B cell (primary cell): ENCODE measurements at regions of chr17 and their contacts with region 1.

Region 1: GRCh38 chr17:82871056-82871903 is 31.5 kb upstream of the ZNF750 start:
- DNase-seq: peak; percentile 95
- ATAC-seq: peak; percentile 82
- H3K4me3 ChIP-seq: peak overlapping the region in 3 of 5 experiments; percentile 18 to 30 (median 25)
- H3K4me3 Mint-ChIP-seq: peak overlapping the region; percentile 82
- H3K27ac ChIP-seq: peak overlapping the region; percentile 78 to 79
- H3K27ac Mint-ChIP-seq: peak overlapping the region; percentile 95
- H3K4me1 ChIP-seq: peaks cover 53 to 55% of the 10 kb centered on the region in 2 donors
- H3K4me1 Mint-ChIP-seq: peaks cover 56% of the 10 kb centered on the region
- H3K27me3 ChIP-seq: peaks cover 0 to 29% (median 0%) of the 10 kb centered on the region in 4 experiments
- H3K27me3 Mint-ChIP-seq: peaks cover 4% of the 10 kb centered on the region
- CTCF ChIP-seq: peak; percentile 73

Region 2: GRCh38 chr17:82816358-82817149 is 54.7 kb before region 1 on chr17:
- CTCF ChIA-PET with region 1: interaction called, 39 read pairs
- POLR2A ChIA-PET with region 1: interaction called, 22 read pairs
- intact Hi-C with region 1: loop called (anchors 1 kb)
- DNase-seq: no peak
- ATAC-seq: no peak
- H3K4me3 ChIP-seq: no peak overlapping the region
- H3K4me3 Mint-ChIP-seq: no peak overlapping the region
- H3K27ac ChIP-seq: no peak overlapping the region
- H3K27ac Mint-ChIP-seq: peak overlapping the region; percentile 20
- H3K4me1 ChIP-seq: peaks cover 24 to 34% of the 10 kb centered on the region in 2 donors
- H3K4me1 Mint-ChIP-seq: peaks cover 34% of the 10 kb centered on the region
- H3K27me3 ChIP-seq: no peaks in the 10 kb centered on the region
- H3K27me3 Mint-ChIP-seq: no peaks in the 10 kb centered on the region
- CTCF ChIP-seq: no peak

Region 3: GRCh38 chr17:82823004-82823403 is 48.3 kb before region 1 on chr17:
- CTCF ChIA-PET with region 1: interaction called, 39 read pairs
- POLR2A ChIA-PET with region 1: interaction called, 22 read pairs
- intact Hi-C with region 1: loop called (anchors 1 kb)
- DNase-seq: no peak
- ATAC-seq: no peak
- H3K4me3 ChIP-seq: no peak overlapping the region
- H3K4me3 Mint-ChIP-seq: no peak overlapping the region
- H3K27ac ChIP-seq: no peak overlapping the region
- H3K27ac Mint-ChIP-seq: no peak overlapping the region
- H3K4me1 ChIP-seq: peaks cover 18 to 19% of the 10 kb centered on the region in 2 donors
- H3K4me1 Mint-ChIP-seq: peaks cover 24% of the 10 kb centered on the region
- H3K27me3 ChIP-seq: no peaks in the 10 kb centered on the region
- H3K27me3 Mint-ChIP-seq: no peaks in the 10 kb centered on the region
- CTCF ChIP-seq: peak; percentile 9

Region 4: DNA sequence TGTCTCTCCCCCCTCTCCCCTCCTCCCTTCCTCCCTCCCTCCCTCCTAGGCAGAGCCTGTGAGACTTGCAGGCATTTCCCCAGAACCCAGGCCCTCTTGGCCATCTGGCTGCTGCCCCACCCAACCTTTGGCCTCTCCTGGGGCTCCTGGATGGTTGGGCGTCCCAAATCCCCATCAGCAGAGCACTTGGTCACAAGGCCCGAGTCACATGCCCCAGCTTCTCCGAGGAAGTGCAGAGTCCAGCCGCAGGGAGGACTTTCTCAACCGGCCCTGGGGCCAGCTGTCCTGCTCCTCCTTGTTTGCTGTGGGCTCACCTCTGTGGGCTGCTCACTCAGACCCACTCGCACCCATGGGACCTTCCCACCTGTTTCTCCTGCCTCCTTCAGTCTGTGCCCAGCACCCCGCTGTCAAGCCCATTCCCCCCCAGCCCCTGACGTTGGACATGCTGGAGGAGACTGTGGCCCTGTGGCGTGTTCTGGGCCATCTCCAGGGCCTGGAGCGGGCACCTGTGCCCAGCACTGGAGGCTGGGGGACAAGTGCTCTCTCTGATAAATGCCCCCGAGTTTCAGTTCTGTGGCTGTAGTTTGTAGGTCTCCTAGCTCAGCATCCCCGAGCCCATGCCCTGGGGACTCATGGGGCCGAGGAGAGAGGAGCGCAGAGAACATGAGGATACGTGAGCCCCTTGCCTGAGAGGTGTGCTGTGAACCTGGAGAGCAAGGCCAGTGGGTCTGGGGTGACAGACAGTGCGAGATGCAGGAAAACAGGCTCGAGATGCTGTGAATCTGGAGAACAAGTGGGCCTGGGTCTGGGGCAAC is 10.8 kb after region 1 on chr17:
- CTCF ChIA-PET with region 1: interaction called, 25 read pairs
- POLR2A ChIA-PET with region 1: interaction called, 20 read pairs
- intact Hi-C with region 1: loop called (anchors 1 kb)
- DNase-seq: no peak
- ATAC-seq: no peak
- H3K4me3 ChIP-seq: no peak overlapping the region
- H3K4me3 Mint-ChIP-seq: peak overlapping the region; percentile 53
- H3K27ac ChIP-seq: no peak overlapping the region
- H3K27ac Mint-ChIP-seq: peak overlapping the region; percentile 68
- H3K4me1 ChIP-seq: peaks cover 46 to 51% of the 10 kb centered on the region in 2 donors
- H3K4me1 Mint-ChIP-seq: peaks cover 52% of the 10 kb centered on the region
- H3K27me3 ChIP-seq: peaks cover 0 to 4% (median 0%) of the 10 kb centered on the region in 4 experiments
- H3K27me3 Mint-ChIP-seq: no peaks in the 10 kb centered on the region
- CTCF ChIP-seq: no peak

Region 5: DNA sequence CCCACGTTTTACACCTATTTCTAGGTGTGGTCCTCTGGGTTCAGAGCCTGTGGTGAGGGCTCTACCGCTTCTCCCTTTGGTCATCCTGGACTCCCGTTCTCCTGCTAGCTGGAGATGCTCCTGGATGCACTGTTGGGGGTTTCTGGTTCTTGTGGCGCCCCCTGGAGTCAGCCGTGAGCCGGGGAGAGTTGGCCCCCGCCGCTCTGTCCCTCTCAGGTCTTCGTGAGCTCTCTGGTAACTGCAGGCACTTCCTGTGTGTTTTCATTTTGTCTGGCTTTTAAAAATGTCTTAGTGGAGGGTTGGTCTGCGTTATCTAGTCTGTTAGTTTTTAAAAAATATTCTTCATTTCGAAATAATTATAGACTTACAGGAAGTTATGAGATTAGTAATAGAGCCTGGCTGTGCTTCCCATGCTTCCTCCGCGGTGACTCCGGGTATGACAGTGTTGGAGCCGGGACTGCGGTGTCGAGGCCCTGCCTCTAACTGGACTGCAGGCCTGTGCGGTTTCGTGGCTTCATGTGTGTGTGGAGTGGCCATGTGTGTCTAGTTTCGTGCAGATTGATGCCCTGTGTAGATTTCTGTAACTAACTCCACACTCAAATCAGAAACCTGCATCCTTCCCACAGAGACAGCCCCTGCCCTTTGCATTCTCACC is 46.5 kb after region 1 on chr17:
- CTCF ChIA-PET with region 1: interaction called, 11 read pairs
- POLR2A ChIA-PET with region 1: interaction called, 3 read pairs
- intact Hi-C with region 1: no loop called
- DNase-seq: no peak
- ATAC-seq: no peak
- H3K4me3 ChIP-seq: no peak overlapping the region
- H3K4me3 Mint-ChIP-seq: no peak overlapping the region
- H3K27ac ChIP-seq: no peak overlapping the region
- H3K27ac Mint-ChIP-seq: no peak overlapping the region
- H3K4me1 ChIP-seq: peaks cover 23 to 24% of the 10 kb centered on the region in 2 donors
- H3K4me1 Mint-ChIP-seq: peaks cover 29% of the 10 kb centered on the region
- H3K27me3 ChIP-seq: no peaks in the 10 kb centered on the region
- H3K27me3 Mint-ChIP-seq: no peaks in the 10 kb centered on the region
- CTCF ChIP-seq: peak; percentile 10

Region 6: GRCh38 chr17:83051395-83052233 is 180.3 kb after region 1 on chr17:
- CTCF ChIA-PET with region 1: interaction called, 3 read pairs
- POLR2A ChIA-PET with region 1: no interaction called
- intact Hi-C with region 1: loop called (anchors 1 kb)
- DNase-seq: peak; percentile 98
- ATAC-seq: peak; percentile 90
- H3K4me3 ChIP-seq: peak overlapping the region in 4 of 5 experiments; percentile 45 to 76 (median 62)
- H3K4me3 Mint-ChIP-seq: peak overlapping the region; percentile 88
- H3K27ac ChIP-seq: peak overlapping the region; percentile 68 to 69
- H3K27ac Mint-ChIP-seq: peak overlapping the region; percentile 91
- H3K4me1 ChIP-seq: peaks cover 11 to 29% of the 10 kb centered on the region in 2 donors
- H3K4me1 Mint-ChIP-seq: peaks cover 30% of the 10 kb centered on the region
- H3K27me3 ChIP-seq: no peaks in the 10 kb centered on the region
- H3K27me3 Mint-ChIP-seq: no peaks in the 10 kb centered on the region
- CTCF ChIP-seq: no peak

Region 7: GRCh38 chr17:83079352-83079747 is 208.1 kb after region 1 on chr17 and contains the start of gene METRNL:
- CTCF ChIA-PET with region 1: no interaction called
- POLR2A ChIA-PET with region 1: interaction called, 3 read pairs
- intact Hi-C with region 1: loop called (anchors 2 kb)
- DNase-seq: peak; percentile 76
- ATAC-seq: peak; percentile 53
- H3K4me3 ChIP-seq: peak within 1 kb of the TSS in 4 of 5 experiments; percentile 17 to 71 (median 54)
- H3K4me3 Mint-ChIP-seq: peak within 1 kb of the TSS; percentile 59
- H3K27ac ChIP-seq: no peak within 1 kb of the TSS
- H3K27ac Mint-ChIP-seq: peak within 1 kb of the TSS; percentile 32
- H3K4me1 ChIP-seq: peaks cover 21 to 24% of the 10 kb centered on the region in 2 donors
- H3K4me1 Mint-ChIP-seq: peaks cover 30% of the 10 kb centered on the region
- H3K27me3 ChIP-seq: peaks cover 0 to 13% (median 5%) of the 10 kb centered on the region in 4 experiments
- H3K27me3 Mint-ChIP-seq: peaks cover 13% of the 10 kb centered on the region
- CTCF ChIP-seq: no peak
- total RNA-seq, gene METRNL: 18.4 and 19.7 TPM in 2 replicates